SK-N-SH (cell line): ENCODE measurements at regions of chr10 and their contacts with region 1.

Region 1: DNA sequence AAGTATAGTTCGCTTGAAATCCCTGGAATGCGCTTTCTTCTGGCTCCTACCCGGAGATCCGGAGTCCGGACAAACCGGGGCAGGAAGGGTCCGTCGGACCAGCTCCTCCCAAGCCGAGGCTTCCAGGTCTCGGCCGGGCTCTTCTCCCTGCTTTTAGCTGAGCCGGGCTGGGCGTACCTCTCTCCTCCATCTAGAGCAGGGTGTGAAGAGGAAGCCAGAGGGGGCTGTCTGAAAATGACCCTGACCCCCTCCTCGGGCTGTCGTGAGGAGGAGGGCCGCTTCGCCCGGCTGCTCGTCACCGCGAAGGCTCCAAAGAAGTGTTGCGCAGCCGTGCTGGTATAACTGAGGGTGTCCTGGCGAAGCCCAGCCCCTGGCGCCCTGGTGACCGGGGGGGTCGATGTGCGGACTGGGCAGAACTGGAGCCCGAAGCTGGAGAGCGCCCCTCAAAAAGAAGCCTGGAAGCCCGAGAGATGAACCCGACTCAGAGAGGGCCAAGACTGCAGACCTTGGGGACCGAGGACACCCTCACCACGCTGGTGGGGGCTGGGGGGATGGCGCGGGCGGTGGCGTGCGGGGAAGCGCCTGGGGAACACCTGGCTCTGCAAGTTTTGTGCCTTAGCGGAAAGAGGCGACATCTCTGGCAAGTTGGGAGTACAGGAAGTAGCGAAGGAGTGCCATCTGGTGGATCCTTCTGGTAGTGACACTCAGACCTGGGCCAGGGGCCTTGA is 5.7 kb downstream of the KAZALD1 start:
- DNase-seq: peak; percentile 87
- H3K4me3 ChIP-seq: peak overlapping the region; percentile 57 to 74
- H3K27ac ChIP-seq: peak overlapping the region in 1 of 2 experiments; percentile 70; a peak in 1 of 4 replicates
- H3K4me1 ChIP-seq: peaks cover under 1 to 19% of the 10 kb centered on the region in 2 experiments; a peak in 1 of 4 replicates
- H3K27me3 ChIP-seq: no peaks in the 10 kb centered on the region
- CTCF ChIP-seq: peak; percentile 84
- EP300 ChIP-seq: no peak
- RAD21 ChIP-seq: peak; percentile 86

Region 2: GRCh38 chr10:101042667-101043355 is 24.7 kb before region 1 on chr10:
- CTCF ChIA-PET with region 1: interaction called, 98 read pairs
- POLR2A ChIA-PET with region 1: interaction called, 11 read pairs
- DNase-seq: peak; percentile 91
- H3K4me3 ChIP-seq: peak overlapping the region; percentile 53 to 68
- H3K27ac ChIP-seq: peak overlapping the region; percentile 91 to 97
- H3K4me1 ChIP-seq: peaks cover 10 to 18% of the 10 kb centered on the region in 2 experiments
- H3K27me3 ChIP-seq: no peaks in the 10 kb centered on the region
- CTCF ChIP-seq: no peak
- EP300 ChIP-seq: no peak
- RAD21 ChIP-seq: no peak

Region 3: GRCh38 chr10:101050208-101051069 is 17.1 kb before region 1 on chr10:
- CTCF ChIA-PET with region 1: interaction called, 98 read pairs
- POLR2A ChIA-PET with region 1: no interaction called
- DNase-seq: peak; percentile 87
- H3K4me3 ChIP-seq: peak overlapping the region; percentile 32 to 33; a peak in 3 of 4 replicates
- H3K27ac ChIP-seq: no peak overlapping the region
- H3K4me1 ChIP-seq: peaks cover 4 to 5% of the 10 kb centered on the region in 2 experiments; a peak in 1 of 4 replicates
- H3K27me3 ChIP-seq: no peaks in the 10 kb centered on the region
- CTCF ChIP-seq: peak; percentile 75
- EP300 ChIP-seq: no peak
- RAD21 ChIP-seq: peak; percentile 42

Region 4: GRCh38 chr10:101080933-101081931 is 13.7 kb after region 1 on chr10:
- CTCF ChIA-PET with region 1: interaction called, 25 read pairs
- POLR2A ChIA-PET with region 1: interaction called, 3 read pairs
- DNase-seq: no peak
- H3K4me3 ChIP-seq: no peak overlapping the region
- H3K27ac ChIP-seq: no peak overlapping the region
- H3K4me1 ChIP-seq: peaks cover 0 to 21% of the 10 kb centered on the region in 2 experiments; a peak in 1 of 4 replicates
- H3K27me3 ChIP-seq: peaks cover 32% of the 10 kb centered on the region; the same call in 1 of the 2 replicates
- CTCF ChIP-seq: no peak
- EP300 ChIP-seq: no peak; a peak in 1 of 4 replicates
- RAD21 ChIP-seq: no peak

Region 5: GRCh38 chr10:101089487-101090299 is 22.2 kb after region 1 on chr10:
- CTCF ChIA-PET with region 1: interaction called, 64 read pairs
- POLR2A ChIA-PET with region 1: no interaction called
- DNase-seq: no peak
- H3K4me3 ChIP-seq: no peak overlapping the region
- H3K27ac ChIP-seq: no peak overlapping the region
- H3K4me1 ChIP-seq: peaks cover 0 to 23% of the 10 kb centered on the region in 2 experiments; a peak in 1 of 4 replicates
- H3K27me3 ChIP-seq: peaks cover 50% of the 10 kb centered on the region; the same call in 1 of the 2 replicates
- CTCF ChIP-seq: no peak
- EP300 ChIP-seq: no peak
- RAD21 ChIP-seq: no peak